MCF 10A (cell line): ENCODE measurements at regions of chr1 and their contacts with region 1.

Region 1: GRCh38 chr1:44002606-44003157 is 11.3 kb downstream of the CCDC24 start:
- DNase-seq: no peak
- H3K4me3 Mint-ChIP-seq: no peak overlapping the region
- H3K27ac Mint-ChIP-seq: no peak overlapping the region
- H3K4me1 Mint-ChIP-seq: no peaks in the 10 kb centered on the region
- H3K27me3 Mint-ChIP-seq: no peaks in the 10 kb centered on the region
- CTCF ChIP-seq: peak; percentile 32

Region 2: GRCh38 chr1:43979528-43980254 is 23.0 kb before region 1 on chr1:
- CTCF ChIA-PET with region 1: interaction called, 3 read pairs
- POLR2A ChIA-PET with region 1: no interaction called
- intact Hi-C with region 1: loop called (anchors 2 kb)
- DNase-seq: peak; percentile 51
- H3K4me3 Mint-ChIP-seq: peak overlapping the region; percentile 63
- H3K27ac Mint-ChIP-seq: no peak overlapping the region
- H3K4me1 Mint-ChIP-seq: peaks cover 55% of the 10 kb centered on the region
- H3K27me3 Mint-ChIP-seq: no peaks in the 10 kb centered on the region
- CTCF ChIP-seq: no peak

Region 3: GRCh38 chr1:44012941-44013609 is 10.4 kb after region 1 on chr1:
- CTCF ChIA-PET with region 1: interaction called, 23 read pairs
- POLR2A ChIA-PET with region 1: no interaction called
- intact Hi-C with region 1: no loop called
- DNase-seq: no peak
- H3K4me3 Mint-ChIP-seq: no peak overlapping the region
- H3K27ac Mint-ChIP-seq: no peak overlapping the region
- H3K4me1 Mint-ChIP-seq: no peaks in the 10 kb centered on the region
- H3K27me3 Mint-ChIP-seq: no peaks in the 10 kb centered on the region
- CTCF ChIP-seq: no peak

Region 4: DNA sequence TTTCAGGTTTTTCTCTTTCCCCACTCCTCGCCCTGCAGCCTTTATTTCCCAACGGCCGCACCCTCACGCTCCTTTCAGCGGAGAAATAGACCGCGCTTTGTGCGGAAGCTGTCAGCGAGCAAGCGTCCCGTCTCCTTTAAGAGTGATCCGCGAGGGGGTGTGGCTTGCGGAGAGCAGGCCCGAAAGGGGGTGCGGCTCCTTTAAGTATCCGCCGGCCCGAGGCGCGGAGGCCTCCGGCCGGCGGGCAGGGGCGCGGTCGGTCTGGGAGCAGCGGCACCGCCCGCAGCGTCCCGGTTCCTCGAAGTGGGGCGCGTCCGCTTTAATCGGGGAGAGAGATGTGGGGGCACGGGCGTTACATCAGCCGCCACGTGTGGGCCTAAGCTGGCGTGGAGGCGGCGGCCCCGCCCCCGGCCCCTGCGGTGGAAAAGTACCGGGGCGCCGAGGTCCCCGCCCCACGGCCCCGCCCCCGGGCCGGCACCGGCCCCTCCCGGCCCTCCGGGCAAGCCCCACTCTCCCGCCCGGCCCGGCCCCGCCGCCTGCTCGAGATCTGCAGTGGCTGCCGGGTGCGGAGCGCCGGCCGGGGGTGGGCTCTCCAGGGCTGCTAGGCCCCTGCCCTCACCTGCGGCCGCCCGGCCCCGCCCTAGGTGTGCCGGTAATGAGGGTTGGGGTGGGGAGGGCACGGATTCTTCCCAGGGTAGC is 27.4 kb after region 1 on chr1:
- CTCF ChIA-PET with region 1: interaction called, 218 read pairs
- POLR2A ChIA-PET with region 1: interaction called, 16 read pairs
- intact Hi-C with region 1: no loop called
- DNase-seq: peak; percentile 90
- H3K4me3 Mint-ChIP-seq: peak overlapping the region; percentile 80
- H3K27ac Mint-ChIP-seq: peak overlapping the region; percentile 99
- H3K4me1 Mint-ChIP-seq: peaks cover 27% of the 10 kb centered on the region
- H3K27me3 Mint-ChIP-seq: no peaks in the 10 kb centered on the region
- CTCF ChIP-seq: no peak

Region 5: DNA sequence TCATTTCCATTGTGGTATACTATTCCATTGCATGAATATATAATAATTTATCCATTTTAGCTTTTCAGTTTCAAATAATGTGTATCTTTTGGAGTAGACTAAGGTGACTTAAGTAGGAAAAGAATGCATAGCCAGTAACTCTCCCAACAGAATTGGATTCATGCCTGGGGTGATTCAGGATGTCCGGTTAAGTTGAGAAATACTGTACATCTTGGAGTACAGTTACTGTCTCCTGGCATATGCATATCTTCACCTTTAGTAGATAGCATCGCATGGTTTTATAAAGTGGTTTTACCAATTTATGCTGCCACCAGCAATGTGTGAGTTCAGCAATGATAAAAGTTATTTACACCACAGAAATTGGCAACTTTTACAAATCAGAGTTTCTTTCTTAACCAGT is 47.2 kb after region 1 on chr1:
- CTCF ChIA-PET with region 1: interaction called, 112 read pairs
- POLR2A ChIA-PET with region 1: interaction called, 3 read pairs
- intact Hi-C with region 1: loop called (anchors 1 kb)
- DNase-seq: peak; percentile 92
- H3K4me3 Mint-ChIP-seq: no peak overlapping the region
- H3K27ac Mint-ChIP-seq: no peak overlapping the region
- H3K4me1 Mint-ChIP-seq: peaks cover 33% of the 10 kb centered on the region
- H3K27me3 Mint-ChIP-seq: no peaks in the 10 kb centered on the region
- CTCF ChIP-seq: no peak

Region 6: GRCh38 chr1:44327679-44328491 is 325.2 kb after region 1 on chr1:
- CTCF ChIA-PET with region 1: no interaction called
- POLR2A ChIA-PET with region 1: no interaction called
- intact Hi-C with region 1: no loop called
- DNase-seq: peak; percentile 100
- H3K4me3 Mint-ChIP-seq: no peak overlapping the region
- H3K27ac Mint-ChIP-seq: peak overlapping the region; percentile 82
- H3K4me1 Mint-ChIP-seq: peaks cover 61% of the 10 kb centered on the region
- H3K27me3 Mint-ChIP-seq: no peaks in the 10 kb centered on the region
- CTCF ChIP-seq: no peak